Activated B cell treated with CpG ODN at 0.5 μM for 24 hours (primary cell): ENCODE measurements at regions of chr10 and their contacts with region 1.

Region 1: DNA sequence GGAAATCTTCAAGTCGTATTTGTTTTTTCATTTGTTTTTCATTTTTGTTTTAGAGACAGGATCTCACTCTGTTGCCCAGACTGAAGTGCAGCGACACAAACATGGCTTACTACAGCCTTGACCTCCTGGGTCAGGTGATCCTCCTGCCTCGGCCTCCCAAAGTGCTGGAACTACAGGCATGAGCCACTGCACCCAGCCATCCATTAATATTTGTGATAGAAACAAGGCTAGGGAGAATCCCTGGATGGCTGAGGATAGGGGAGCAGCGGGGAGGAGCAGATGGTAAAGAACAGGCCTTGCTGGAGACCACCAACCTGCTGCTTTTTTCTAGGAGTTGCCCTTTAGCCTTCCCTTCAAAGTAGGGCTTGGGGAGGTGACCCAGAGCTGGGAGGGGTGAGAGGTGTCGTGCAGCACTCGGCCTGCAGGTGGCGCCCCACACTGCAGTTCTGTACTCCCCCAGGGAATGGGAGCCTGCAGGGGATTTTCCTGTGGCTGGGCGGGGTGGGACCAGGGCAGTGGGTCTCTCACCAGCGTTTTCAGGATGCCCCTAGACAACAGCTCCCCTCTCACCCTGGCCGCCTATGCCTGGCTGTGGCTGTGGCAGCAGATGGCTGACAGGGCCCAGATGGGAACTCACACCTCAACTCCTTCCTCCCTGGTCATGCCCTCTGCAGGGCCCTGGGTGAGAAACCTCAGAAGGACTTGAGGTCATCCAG is 12.6 kb upstream of the CDH23 start:
- DNase-seq: peak; percentile 82
- ATAC-seq: peak; percentile 100
- H3K4me3 Mint-ChIP-seq: no peak overlapping the region
- H3K27ac Mint-ChIP-seq: no peak overlapping the region
- H3K4me1 Mint-ChIP-seq: peaks cover 7% of the 10 kb centered on the region
- H3K27me3 Mint-ChIP-seq: peaks cover 3% of the 10 kb centered on the region
- CTCF ChIP-seq: no peak

Region 2: GRCh38 chr10:71496927-71497762 is 113.0 kb after region 1 on chr10:
- CTCF ChIA-PET with region 1: no interaction called
- POLR2A ChIA-PET with region 1: no interaction called
- intact Hi-C with region 1: no loop called
- DNase-seq: no peak
- ATAC-seq: no peak
- H3K4me3 Mint-ChIP-seq: no peak overlapping the region
- H3K27ac Mint-ChIP-seq: no peak overlapping the region
- H3K4me1 Mint-ChIP-seq: peaks cover 28% of the 10 kb centered on the region
- H3K27me3 Mint-ChIP-seq: peaks cover 3% of the 10 kb centered on the region
- CTCF ChIP-seq: no peak

Region 3: GRCh38 chr10:71608819-71609768 is 225.0 kb after region 1 on chr10:
- CTCF ChIA-PET with region 1: interaction called, 6 read pairs
- POLR2A ChIA-PET with region 1: no interaction called
- intact Hi-C with region 1: loop called (anchors 1 kb)
- DNase-seq: peak; percentile 48
- ATAC-seq: no peak
- H3K4me3 Mint-ChIP-seq: no peak overlapping the region
- H3K27ac Mint-ChIP-seq: no peak overlapping the region
- H3K4me1 Mint-ChIP-seq: no peaks in the 10 kb centered on the region
- H3K27me3 Mint-ChIP-seq: peaks cover 3% of the 10 kb centered on the region
- CTCF ChIP-seq: no peak